ENCODE measurements at regions of chr2 and their contacts with region 1.

Region 1: DNA sequence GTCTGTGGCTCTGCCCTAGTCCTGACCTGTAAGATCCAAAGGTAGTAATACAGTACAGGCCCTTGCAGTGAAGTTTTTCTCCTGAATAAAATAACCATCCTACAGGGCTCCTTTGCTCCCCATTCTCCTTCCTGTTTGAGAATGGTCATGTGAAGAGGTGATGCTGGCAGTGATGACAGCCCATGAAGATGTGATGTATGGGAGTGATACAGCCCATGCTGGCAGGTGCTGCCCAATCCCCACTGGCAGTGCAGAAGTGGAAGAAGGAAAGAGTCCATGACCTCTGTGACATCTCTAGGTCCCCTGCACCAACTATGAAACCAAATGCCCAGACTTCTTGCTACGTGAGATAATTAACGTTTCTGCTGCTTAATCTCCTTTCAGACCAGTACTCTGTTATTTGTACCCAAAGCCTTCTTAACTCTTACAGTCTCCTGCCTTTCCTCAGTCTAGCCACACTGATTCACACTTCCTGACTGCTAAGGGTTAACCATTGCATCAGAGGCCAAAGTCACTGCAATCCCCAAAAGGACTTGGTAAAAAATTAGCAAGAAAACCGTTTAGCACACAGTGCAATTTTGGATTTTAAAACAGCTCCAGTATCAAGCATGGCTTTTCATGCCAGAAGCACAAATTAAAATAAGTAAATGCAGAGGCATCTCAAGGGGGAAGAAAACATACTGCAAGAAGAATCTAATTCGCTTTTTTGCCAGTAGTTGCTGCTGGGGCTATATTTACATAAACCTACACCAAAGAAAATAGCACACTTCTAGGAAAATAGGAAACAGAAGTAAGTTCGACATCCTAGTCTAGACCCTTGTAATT is 98.0 kb downstream of the STK39 start:
- DNase-seq: no peak
- ATAC-seq: no peak
- H3K4me3 ChIP-seq: no peak overlapping the region
- H3K27ac ChIP-seq: no peak overlapping the region
- H3K4me1 ChIP-seq: peaks cover 5 to 7% of the 10 kb centered on the region in 2 experiments; a peak in 2 of 4 replicates
- H3K27me3 ChIP-seq: no peaks in the 10 kb centered on the region
- CTCF ChIP-seq: no peak
- POLR2A ChIP-seq: no peak
- RAD21 ChIP-seq: no peak

Region 2: DNA sequence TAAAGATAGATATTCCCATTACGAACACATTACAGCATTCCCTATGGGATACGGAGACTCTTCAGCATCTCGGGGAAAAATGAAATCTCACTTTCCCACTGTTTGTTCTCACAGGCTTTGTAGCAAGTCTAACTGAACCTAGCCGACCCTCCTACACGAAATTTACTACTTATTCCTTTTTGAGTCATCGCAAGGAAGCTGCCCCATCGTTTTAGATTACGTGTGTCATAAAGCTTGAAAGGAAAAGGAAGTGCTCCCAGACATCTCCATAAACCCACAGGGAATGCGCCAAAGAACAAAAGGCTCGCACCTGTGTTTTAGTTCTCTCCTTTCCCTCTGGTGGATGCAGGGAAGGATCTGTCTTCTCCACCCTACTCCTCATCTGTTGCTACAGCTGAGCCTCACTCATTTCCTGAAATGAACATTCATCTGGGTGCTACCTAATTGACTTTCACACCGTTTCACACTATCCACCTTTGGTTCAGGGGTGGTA is 174.2 kb after region 1 on chr2:
- CTCF ChIA-PET with region 1: no interaction called
- POLR2A ChIA-PET with region 1: no interaction called
- RAD21 ChIA-PET with region 1: no interaction called
- intact Hi-C with region 1: loop called (anchors 5 kb)
- DNase-seq: no peak
- ATAC-seq: no peak
- H3K4me3 ChIP-seq: no peak overlapping the region
- H3K27ac ChIP-seq: no peak overlapping the region
- H3K4me1 ChIP-seq: no peaks in the 10 kb centered on the region
- H3K27me3 ChIP-seq: no peaks in the 10 kb centered on the region
- CTCF ChIP-seq: no peak
- POLR2A ChIP-seq: no peak
- RAD21 ChIP-seq: no peak

Region 3: GRCh38 chr2:168912901-168913369 is 763.6 kb after region 1 on chr2:
- CTCF ChIA-PET with region 1: no interaction called
- POLR2A ChIA-PET with region 1: no interaction called
- RAD21 ChIA-PET with region 1: no interaction called
- intact Hi-C with region 1: loop called (anchors 10 kb)
- DNase-seq: no peak
- ATAC-seq: no peak
- H3K4me3 ChIP-seq: no peak overlapping the region
- H3K27ac ChIP-seq: no peak overlapping the region
- H3K4me1 ChIP-seq: no peaks in the 10 kb centered on the region
- H3K27me3 ChIP-seq: no peaks in the 10 kb centered on the region
- CTCF ChIP-seq: no peak
- POLR2A ChIP-seq: no peak
- RAD21 ChIP-seq: no peak